ENCODE measurements at regions of chr21 and their contacts with region 1.

Region 1: GRCh38 chr21:34888569-34889319 is 160.4 kb downstream of the RUNX1 start:
- DNase-seq: peak; percentile 59 to 90 (median 62)
- ATAC-seq: peak; percentile 61
- H3K4me3 ChIP-seq: peak overlapping the region; percentile 72
- H3K4me3 Mint-ChIP-seq: peak overlapping the region; percentile 89 to 100 (median 96)
- H3K27ac ChIP-seq: peak overlapping the region; percentile 86
- H3K27ac Mint-ChIP-seq: peak overlapping the region; percentile 95 to 100 (median 99)
- H3K4me1 ChIP-seq: peaks cover 22 to 25% of the 10 kb centered on the region in 2 donors
- H3K4me1 Mint-ChIP-seq: peaks cover 15 to 70% (median 61%) of the 10 kb centered on the region in 7 donors
- H3K27me3 ChIP-seq: no peaks in the 10 kb centered on the region
- H3K27me3 Mint-ChIP-seq: peaks cover 0 to 16% (median 0%) of the 10 kb centered on the region in 5 donors

Region 2: DNA sequence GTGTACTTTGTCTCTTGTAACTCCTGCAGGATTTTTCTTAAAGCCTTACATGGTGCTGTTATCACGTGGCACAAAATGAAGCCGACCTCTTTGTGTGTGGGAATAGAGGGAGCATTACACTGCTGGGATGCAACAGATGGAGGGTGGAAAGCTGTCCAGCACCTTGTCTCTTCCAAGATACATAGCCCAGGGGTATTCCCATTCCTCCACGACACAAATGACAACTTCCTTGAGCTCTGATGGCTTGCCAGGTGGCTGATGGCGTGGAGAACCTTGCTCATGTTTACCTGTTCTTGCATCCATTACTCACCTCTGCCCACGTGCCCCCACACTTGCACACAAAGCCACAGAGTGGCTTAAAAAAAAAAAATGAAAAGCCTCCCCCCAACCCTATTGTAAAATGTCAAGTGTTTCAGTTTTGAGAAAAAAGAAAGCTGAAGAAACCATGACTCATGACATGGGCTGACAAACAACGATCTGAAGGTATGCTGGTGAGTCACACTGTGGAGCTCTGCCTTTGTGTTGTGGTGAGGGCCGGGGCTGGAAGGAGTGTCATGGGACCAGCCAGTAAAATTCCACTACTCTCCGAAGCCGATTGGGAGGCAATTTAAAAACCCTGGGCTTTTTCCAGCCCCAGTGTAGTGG is 941.2 kb before region 1 on chr21:
- CTCF ChIA-PET with region 1: no interaction called
- POLR2A ChIA-PET with region 1: no interaction called
- intact Hi-C with region 1: loop called in 1 of 2 experiments (anchors 2 kb)
- DNase-seq: peak; percentile 47 to 95 (median 84)
- ATAC-seq: peak; percentile 76
- H3K4me3 ChIP-seq: peak overlapping the region; percentile 38
- H3K4me3 Mint-ChIP-seq: peak overlapping the region; percentile 71 to 87 (median 78)
- H3K27ac ChIP-seq: peak overlapping the region; percentile 93
- H3K27ac Mint-ChIP-seq: peak overlapping the region; percentile 98 to 100 (median 98)
- H3K4me1 ChIP-seq: peaks cover 56 to 64% of the 10 kb centered on the region in 2 donors
- H3K4me1 Mint-ChIP-seq: peaks cover 53 to 85% (median 77%) of the 10 kb centered on the region in 7 donors
- H3K27me3 ChIP-seq: no peaks in the 10 kb centered on the region
- H3K27me3 Mint-ChIP-seq: peaks cover 0 to 6% (median 0%) of the 10 kb centered on the region in 5 donors

Region 3: DNA sequence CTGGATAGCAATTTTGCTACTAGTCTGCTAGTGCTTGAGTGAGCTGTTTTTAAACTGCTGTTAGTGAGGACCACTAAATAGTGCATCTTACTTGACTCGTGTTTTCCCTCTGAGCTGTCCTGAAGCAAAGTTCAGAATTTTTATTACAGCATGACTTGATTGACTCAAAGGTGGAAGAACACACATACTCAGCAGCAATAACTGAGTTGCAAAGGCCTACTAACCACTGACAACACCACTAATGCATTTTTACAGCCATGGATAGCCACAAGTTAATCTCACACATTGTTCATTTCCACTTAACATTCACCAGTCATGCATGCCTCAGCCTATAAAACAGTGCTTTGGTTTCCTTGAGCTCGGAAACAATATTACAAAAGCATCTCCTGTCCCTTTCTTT is 11.6 kb after region 1 on chr21:
- CTCF ChIA-PET with region 1: interaction called, 12 read pairs
- POLR2A ChIA-PET with region 1: interaction called, 6 read pairs
- intact Hi-C with region 1: no loop called
- DNase-seq: no peak
- ATAC-seq: no peak
- H3K4me3 ChIP-seq: no peak overlapping the region
- H3K4me3 Mint-ChIP-seq: no peak overlapping the region
- H3K27ac ChIP-seq: no peak overlapping the region
- H3K27ac Mint-ChIP-seq: peak overlapping the region in 4 of 9 donors; percentile 20 to 59 (median 36)
- H3K4me1 ChIP-seq: peaks cover 0 to 5% of the 10 kb centered on the region in 2 donors
- H3K4me1 Mint-ChIP-seq: peaks cover 12 to 53% (median 35%) of the 10 kb centered on the region in 7 donors
- H3K27me3 ChIP-seq: no peaks in the 10 kb centered on the region
- H3K27me3 Mint-ChIP-seq: peaks cover 0 to 13% (median 0%) of the 10 kb centered on the region in 5 donors

Region 4: GRCh38 chr21:35026617-35027562 is 138.1 kb after region 1 on chr21:
- CTCF ChIA-PET with region 1: interaction called, 7 read pairs
- POLR2A ChIA-PET with region 1: interaction called, 33 read pairs
- intact Hi-C with region 1: loop called (anchors 1 kb)
- DNase-seq: peak; percentile 74 to 93 (median 91)
- ATAC-seq: peak; percentile 93
- H3K4me3 ChIP-seq: peak overlapping the region; percentile 45
- H3K4me3 Mint-ChIP-seq: peak overlapping the region; percentile 77 to 98 (median 86)
- H3K27ac ChIP-seq: peak overlapping the region; percentile 75
- H3K27ac Mint-ChIP-seq: peak overlapping the region; percentile 96 to 100 (median 99)
- H3K4me1 ChIP-seq: peaks cover 69 to 85% of the 10 kb centered on the region in 2 donors
- H3K4me1 Mint-ChIP-seq: peaks cover 76 to 98% (median 93%) of the 10 kb centered on the region in 7 donors
- H3K27me3 ChIP-seq: no peaks in the 10 kb centered on the region
- H3K27me3 Mint-ChIP-seq: no peaks in the 10 kb centered on the region

Region 5: DNA sequence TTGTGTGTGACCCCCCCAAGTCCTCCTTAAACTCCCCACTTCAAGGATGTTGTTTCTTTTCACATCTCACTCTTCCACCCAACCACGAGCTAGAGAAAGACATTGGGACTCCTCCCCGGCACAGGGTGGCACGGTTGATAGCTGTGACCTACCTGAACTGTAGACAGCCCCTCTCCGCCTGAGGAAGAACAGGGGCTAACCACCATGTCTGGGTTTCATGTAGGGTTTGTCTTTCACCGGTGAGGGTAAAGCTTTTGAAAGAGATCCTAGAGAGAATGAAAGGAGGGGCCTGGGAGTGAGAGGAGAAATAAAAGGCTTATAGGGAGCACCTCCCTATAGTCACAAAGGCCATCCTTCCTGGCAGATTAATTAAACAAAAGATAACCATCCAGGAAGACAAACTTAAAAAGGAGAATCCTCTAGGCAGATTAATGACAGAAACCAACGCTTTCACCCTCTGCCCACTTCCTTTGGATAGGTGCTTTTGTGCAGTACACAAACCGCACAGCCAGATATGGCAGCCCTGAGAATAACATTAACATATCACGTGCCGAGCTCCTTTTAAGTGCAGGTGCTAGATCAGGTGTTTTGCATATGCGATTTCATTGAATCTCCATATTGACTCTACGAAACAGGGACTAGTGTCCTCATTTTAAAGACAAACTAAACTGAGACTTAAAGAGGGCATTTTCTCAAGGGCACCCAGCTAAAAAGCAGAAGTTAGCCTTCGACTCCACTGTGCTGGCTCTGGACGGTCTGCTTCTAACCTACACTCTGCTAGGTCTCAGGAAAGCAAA is 338.4 kb after region 1 on chr21:
- CTCF ChIA-PET with region 1: interaction called, 3 read pairs
- POLR2A ChIA-PET with region 1: interaction called, 3 read pairs
- intact Hi-C with region 1: loop called (anchors 1 to 5 kb)
- DNase-seq: peak in 7 of 9 donors; percentile 46 to 74 (median 63)
- ATAC-seq: peak; percentile 87
- H3K4me3 ChIP-seq: peak overlapping the region; percentile 43
- H3K4me3 Mint-ChIP-seq: peak overlapping the region; percentile 51 to 80 (median 70)
- H3K27ac ChIP-seq: peak overlapping the region; percentile 20
- H3K27ac Mint-ChIP-seq: peak overlapping the region; percentile 48 to 90 (median 82)
- H3K4me1 ChIP-seq: peaks cover 26 to 30% of the 10 kb centered on the region in 2 donors
- H3K4me1 Mint-ChIP-seq: peaks cover 27 to 50% (median 43%) of the 10 kb centered on the region in 7 donors
- H3K27me3 ChIP-seq: no peaks in the 10 kb centered on the region
- H3K27me3 Mint-ChIP-seq: peaks cover 0 to 6% (median 0%) of the 10 kb centered on the region in 5 donors

Region 6: GRCh38 chr21:35616090-35616489 is 727.3 kb after region 1 on chr21:
- CTCF ChIA-PET with region 1: no interaction called
- POLR2A ChIA-PET with region 1: no interaction called
- intact Hi-C with region 1: loop called (anchors 1 to 10 kb)
- DNase-seq: peak in 6 of 9 donors; percentile 2 to 44 (median 28)
- ATAC-seq: no peak
- H3K4me3 ChIP-seq: no peak overlapping the region
- H3K4me3 Mint-ChIP-seq: no peak overlapping the region
- H3K27ac ChIP-seq: no peak overlapping the region
- H3K27ac Mint-ChIP-seq: no peak overlapping the region
- H3K4me1 ChIP-seq: no peaks in the 10 kb centered on the region
- H3K4me1 Mint-ChIP-seq: peaks cover 0 to 6% (median 3%) of the 10 kb centered on the region in 7 donors
- H3K27me3 ChIP-seq: no peaks in the 10 kb centered on the region
- H3K27me3 Mint-ChIP-seq: peaks cover 0 to 11% (median 0%) of the 10 kb centered on the region in 5 donors